HepG2 (cell line): ENCODE measurements at regions of chr4 and their contacts with region 1.

Region 1: DNA sequence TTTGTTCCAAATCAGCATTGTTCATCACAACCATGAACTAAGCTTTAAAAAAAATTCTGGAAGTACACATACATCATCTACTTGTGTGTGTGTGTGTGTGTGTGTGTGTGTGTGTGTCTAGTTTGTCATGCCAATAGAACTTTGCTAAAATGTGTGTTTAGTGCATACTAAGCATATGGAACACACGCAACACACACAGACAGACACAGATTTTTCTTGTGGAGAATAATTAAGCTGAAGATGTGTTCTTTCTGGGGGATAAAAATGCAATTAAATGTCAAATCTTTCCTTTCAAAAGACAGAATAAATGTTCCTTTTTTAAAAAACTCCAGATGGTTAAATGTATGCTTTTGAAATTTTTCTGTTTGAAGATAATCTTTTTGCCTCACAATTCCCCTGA is 530.4 kb upstream of the INTU start:
- DNase-seq: no peak
- ATAC-seq: no peak
- H3K4me3 ChIP-seq: no peak overlapping the region
- H3K27ac ChIP-seq: no peak overlapping the region
- H3K4me1 ChIP-seq: no peaks in the 10 kb centered on the region
- H3K27me3 ChIP-seq: no peaks in the 10 kb centered on the region
- CTCF ChIP-seq: no peak
- EP300 ChIP-seq: no peak
- POLR2A ChIP-seq: no peak
- RAD21 ChIP-seq: no peak

Region 2: DNA sequence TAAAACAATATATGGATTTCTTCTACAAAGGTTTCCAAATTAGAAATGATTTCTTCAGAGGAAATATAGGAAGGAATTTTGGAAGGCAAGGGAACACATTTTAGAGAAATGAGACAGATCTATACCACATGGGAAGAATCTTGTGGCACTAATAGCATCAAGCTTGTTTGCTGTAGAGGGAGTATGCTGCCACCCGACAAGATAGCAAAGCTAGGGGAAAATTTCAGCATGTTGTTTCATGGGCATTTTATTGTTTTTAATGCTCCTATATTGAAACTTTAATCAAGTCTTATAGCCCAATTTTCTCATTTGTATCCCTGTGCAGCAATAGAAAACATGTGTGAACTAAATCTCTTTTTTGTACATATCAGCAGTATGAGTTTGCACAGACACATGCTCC is 21.3 kb before region 1 on chr4:
- CTCF ChIA-PET with region 1: no interaction called
- POLR2A ChIA-PET with region 1: no interaction called
- in situ Hi-C with region 1: no loop called
- intact Hi-C with region 1: loop called (anchors 1 kb)
- DNase-seq: no peak
- ATAC-seq: no peak
- H3K4me3 ChIP-seq: no peak overlapping the region
- H3K27ac ChIP-seq: no peak overlapping the region
- H3K4me1 ChIP-seq: no peaks in the 10 kb centered on the region
- H3K27me3 ChIP-seq: no peaks in the 10 kb centered on the region
- CTCF ChIP-seq: no peak
- EP300 ChIP-seq: no peak
- POLR2A ChIP-seq: no peak
- RAD21 ChIP-seq: no peak

Region 3: DNA sequence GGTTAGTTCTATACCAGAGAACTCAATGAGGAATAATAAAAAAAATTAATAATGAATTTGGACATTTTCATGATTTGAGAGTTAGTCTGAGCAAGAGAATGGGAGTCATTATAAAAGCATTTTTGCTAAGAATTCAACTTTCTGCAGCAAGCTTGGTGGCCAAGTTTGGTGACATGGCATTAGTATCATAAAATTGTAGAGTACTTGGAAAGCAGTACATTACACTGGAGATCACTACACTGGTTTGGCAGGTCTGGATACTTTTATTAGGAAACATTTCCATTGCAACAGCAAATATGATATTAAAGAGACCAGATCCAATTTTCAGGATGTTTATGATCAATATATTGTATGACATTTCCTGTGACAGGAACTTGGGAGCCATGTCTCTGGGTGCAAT is 281.3 kb after region 1 on chr4:
- CTCF ChIA-PET with region 1: no interaction called
- POLR2A ChIA-PET with region 1: no interaction called
- in situ Hi-C with region 1: no loop called
- intact Hi-C with region 1: no loop called
- DNase-seq: no peak
- ATAC-seq: no peak
- H3K4me3 ChIP-seq: no peak overlapping the region
- H3K27ac ChIP-seq: no peak overlapping the region
- H3K4me1 ChIP-seq: no peaks in the 10 kb centered on the region
- H3K27me3 ChIP-seq: no peaks in the 10 kb centered on the region
- CTCF ChIP-seq: no peak
- EP300 ChIP-seq: no peak
- POLR2A ChIP-seq: no peak
- RAD21 ChIP-seq: no peak

Region 4: DNA sequence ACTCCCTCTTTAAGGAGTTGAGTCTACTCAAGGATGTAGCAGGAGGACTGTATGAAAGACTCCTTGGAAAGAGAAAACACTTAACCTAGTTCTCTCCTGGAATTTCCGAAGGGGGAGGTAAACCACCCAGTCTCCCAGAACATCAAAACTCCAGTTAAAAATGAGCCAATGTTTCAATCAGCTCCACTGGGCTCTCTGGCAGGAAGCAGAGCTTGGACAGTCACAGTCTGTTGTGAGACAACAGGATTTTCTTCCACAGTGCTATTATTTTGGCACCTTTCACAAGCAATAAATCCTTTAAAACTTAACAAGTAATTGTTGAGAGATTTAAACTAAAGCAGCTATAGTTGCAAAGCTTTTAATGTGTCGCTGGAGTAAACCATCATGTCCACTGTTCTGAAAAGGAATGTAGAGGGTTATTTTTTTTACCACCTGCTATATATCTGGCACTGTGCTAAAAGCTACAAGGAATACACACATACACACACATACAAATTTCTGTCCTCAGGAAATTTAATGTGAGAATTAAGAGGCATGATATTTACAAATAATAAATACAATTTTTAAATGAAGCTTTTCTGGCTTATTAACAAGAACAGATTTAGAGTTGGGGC is 301.2 kb after region 1 on chr4:
- CTCF ChIA-PET with region 1: no interaction called
- POLR2A ChIA-PET with region 1: no interaction called
- in situ Hi-C with region 1: no loop called
- intact Hi-C with region 1: no loop called
- DNase-seq: no peak
- ATAC-seq: no peak
- H3K4me3 ChIP-seq: no peak overlapping the region
- H3K27ac ChIP-seq: no peak overlapping the region
- H3K4me1 ChIP-seq: no peaks in the 10 kb centered on the region
- H3K27me3 ChIP-seq: no peaks in the 10 kb centered on the region
- CTCF ChIP-seq: no peak
- EP300 ChIP-seq: no peak
- POLR2A ChIP-seq: no peak
- RAD21 ChIP-seq: no peak